CD4-positive, alpha-beta T cell (primary cell): ENCODE measurements at regions of chrX and their contacts with region 1.

Region 1: GRCh38 chrX:24498975-24499374 is 33.9 kb downstream of the PDK3 start:
- DNase-seq: peak in 3 of 14 experiments; percentile 61 to 74 (median 74)
- ATAC-seq: peak; percentile 80
- H3K4me3 ChIP-seq: no peak overlapping the region
- H3K4me3 Mint-ChIP-seq: peak overlapping the region; percentile 42
- H3K27ac ChIP-seq: peak overlapping the region in 1 of 2 donors; percentile 41
- H3K27ac Mint-ChIP-seq: peak overlapping the region; percentile 78
- H3K4me1 ChIP-seq: peaks cover 13% of the 10 kb centered on the region
- H3K4me1 Mint-ChIP-seq: peaks cover 34% of the 10 kb centered on the region
- H3K27me3 ChIP-seq: no peaks in the 10 kb centered on the region
- H3K27me3 Mint-ChIP-seq: no peaks in the 10 kb centered on the region
- CTCF ChIP-seq: peak; percentile 30

Region 2: DNA sequence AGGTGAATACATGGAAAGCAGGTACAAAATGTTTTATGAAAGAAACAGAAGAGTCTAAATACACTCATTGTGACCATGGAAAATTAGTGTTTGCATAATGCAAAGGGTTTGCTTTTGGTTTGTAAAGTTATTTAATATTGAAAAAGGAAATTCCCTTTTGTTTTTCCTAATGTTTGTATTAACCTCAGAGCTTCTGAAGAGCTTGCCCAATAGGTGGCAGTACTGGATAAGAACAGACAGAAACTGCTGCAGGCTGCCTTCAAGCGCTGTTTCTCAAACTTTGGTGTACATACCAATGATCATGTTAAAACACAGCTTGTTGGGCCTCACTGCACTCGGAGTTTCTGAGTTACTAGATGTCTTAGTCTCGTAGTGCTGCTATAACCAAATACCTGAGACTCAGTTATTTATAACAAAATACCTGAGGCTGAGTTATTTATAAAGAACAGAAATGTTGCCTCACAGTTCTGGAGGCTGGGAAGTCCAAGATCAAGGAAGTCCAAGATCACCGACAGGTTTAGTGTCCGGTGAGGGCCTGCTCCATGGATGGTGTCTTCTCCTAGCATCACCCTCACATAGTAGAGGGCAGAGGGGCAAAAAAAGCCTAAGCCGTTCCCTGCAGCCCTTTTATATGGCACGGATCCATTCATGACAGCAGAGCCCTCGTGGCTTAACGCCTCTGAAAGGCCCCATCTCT is 239.3 kb before region 1 on chrX:
- CTCF ChIA-PET with region 1: no interaction called
- POLR2A ChIA-PET with region 1: no interaction called
- intact Hi-C with region 1: loop called in 1 of 2 experiments (anchors 2 kb)
- DNase-seq: peak in 4 of 14 experiments; percentile 15 to 54 (median 38)
- ATAC-seq: no peak
- H3K4me3 ChIP-seq: no peak overlapping the region
- H3K4me3 Mint-ChIP-seq: no peak overlapping the region
- H3K27ac ChIP-seq: no peak overlapping the region
- H3K27ac Mint-ChIP-seq: no peak overlapping the region
- H3K4me1 ChIP-seq: peaks cover 10% of the 10 kb centered on the region
- H3K4me1 Mint-ChIP-seq: peaks cover 9% of the 10 kb centered on the region
- H3K27me3 ChIP-seq: no peaks in the 10 kb centered on the region
- H3K27me3 Mint-ChIP-seq: no peaks in the 10 kb centered on the region
- CTCF ChIP-seq: peak; percentile 50

Region 3: DNA sequence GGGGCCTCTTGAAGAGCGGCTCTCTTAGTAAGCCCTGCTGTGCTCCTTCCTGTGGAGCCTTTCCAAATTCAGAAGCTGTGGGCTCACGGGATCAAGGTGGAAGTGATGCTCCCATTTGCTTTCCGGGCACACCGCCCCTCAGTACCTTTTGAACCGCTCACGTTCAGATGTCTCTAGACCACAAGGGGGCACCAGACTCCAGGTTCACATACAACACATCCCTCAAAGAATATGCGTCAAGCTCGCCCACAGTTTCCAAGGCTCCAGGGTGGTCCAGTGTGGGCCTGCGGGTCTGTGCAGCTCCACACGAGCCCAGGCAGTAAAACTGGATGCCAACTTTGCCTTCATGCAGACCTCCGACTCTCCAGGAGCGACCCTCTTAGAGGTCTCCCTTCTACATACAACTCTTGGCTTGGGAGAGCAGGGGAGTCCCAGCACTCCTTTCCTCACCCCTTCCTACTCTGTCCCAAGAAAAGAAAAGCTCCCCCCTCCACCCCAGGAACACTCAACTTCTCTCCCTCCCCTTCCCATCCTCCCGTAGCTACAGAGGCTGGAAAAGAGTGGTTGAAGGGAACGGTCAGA is 127.5 kb before region 1 on chrX:
- CTCF ChIA-PET with region 1: interaction called, 9 read pairs
- POLR2A ChIA-PET with region 1: no interaction called
- intact Hi-C with region 1: loop called in 1 of 2 experiments (anchors 1 kb)
- DNase-seq: peak; percentile 24 to 78 (median 40)
- ATAC-seq: peak; percentile 73
- H3K4me3 ChIP-seq: no peak overlapping the region
- H3K4me3 Mint-ChIP-seq: no peak overlapping the region
- H3K27ac ChIP-seq: no peak overlapping the region
- H3K27ac Mint-ChIP-seq: no peak overlapping the region
- H3K4me1 ChIP-seq: peaks cover 6% of the 10 kb centered on the region
- H3K4me1 Mint-ChIP-seq: peaks cover 6% of the 10 kb centered on the region
- H3K27me3 ChIP-seq: no peaks in the 10 kb centered on the region
- H3K27me3 Mint-ChIP-seq: no peaks in the 10 kb centered on the region
- CTCF ChIP-seq: peak; percentile 58

Region 4: GRCh38 chrX:24395775-24396174 is 103.2 kb before region 1 on chrX:
- CTCF ChIA-PET with region 1: interaction called, 64 read pairs
- POLR2A ChIA-PET with region 1: interaction called, 33 read pairs
- intact Hi-C with region 1: loop called (anchors 1 kb)
- DNase-seq: peak in 12 of 14 experiments; percentile 4 to 81 (median 26)
- ATAC-seq: peak; percentile 77
- H3K4me3 ChIP-seq: no peak overlapping the region
- H3K4me3 Mint-ChIP-seq: no peak overlapping the region
- H3K27ac ChIP-seq: no peak overlapping the region
- H3K27ac Mint-ChIP-seq: no peak overlapping the region
- H3K4me1 ChIP-seq: no peaks in the 10 kb centered on the region
- H3K4me1 Mint-ChIP-seq: peaks cover 6% of the 10 kb centered on the region
- H3K27me3 ChIP-seq: peaks cover 0 to 2% of the 10 kb centered on the region in 2 experiments
- H3K27me3 Mint-ChIP-seq: no peaks in the 10 kb centered on the region
- CTCF ChIP-seq: peak; percentile 72

Region 5: GRCh38 chrX:24448762-24449250 is 50.2 kb before region 1 on chrX:
- CTCF ChIA-PET with region 1: no interaction called
- POLR2A ChIA-PET with region 1: interaction called, 3 read pairs
- intact Hi-C with region 1: loop called (anchors 10 kb)
- DNase-seq: no peak
- ATAC-seq: no peak
- H3K4me3 ChIP-seq: no peak overlapping the region
- H3K4me3 Mint-ChIP-seq: no peak overlapping the region
- H3K27ac ChIP-seq: no peak overlapping the region
- H3K27ac Mint-ChIP-seq: no peak overlapping the region
- H3K4me1 ChIP-seq: no peaks in the 10 kb centered on the region
- H3K4me1 Mint-ChIP-seq: no peaks in the 10 kb centered on the region
- H3K27me3 ChIP-seq: no peaks in the 10 kb centered on the region
- H3K27me3 Mint-ChIP-seq: no peaks in the 10 kb centered on the region
- CTCF ChIP-seq: no peak

Region 6: DNA sequence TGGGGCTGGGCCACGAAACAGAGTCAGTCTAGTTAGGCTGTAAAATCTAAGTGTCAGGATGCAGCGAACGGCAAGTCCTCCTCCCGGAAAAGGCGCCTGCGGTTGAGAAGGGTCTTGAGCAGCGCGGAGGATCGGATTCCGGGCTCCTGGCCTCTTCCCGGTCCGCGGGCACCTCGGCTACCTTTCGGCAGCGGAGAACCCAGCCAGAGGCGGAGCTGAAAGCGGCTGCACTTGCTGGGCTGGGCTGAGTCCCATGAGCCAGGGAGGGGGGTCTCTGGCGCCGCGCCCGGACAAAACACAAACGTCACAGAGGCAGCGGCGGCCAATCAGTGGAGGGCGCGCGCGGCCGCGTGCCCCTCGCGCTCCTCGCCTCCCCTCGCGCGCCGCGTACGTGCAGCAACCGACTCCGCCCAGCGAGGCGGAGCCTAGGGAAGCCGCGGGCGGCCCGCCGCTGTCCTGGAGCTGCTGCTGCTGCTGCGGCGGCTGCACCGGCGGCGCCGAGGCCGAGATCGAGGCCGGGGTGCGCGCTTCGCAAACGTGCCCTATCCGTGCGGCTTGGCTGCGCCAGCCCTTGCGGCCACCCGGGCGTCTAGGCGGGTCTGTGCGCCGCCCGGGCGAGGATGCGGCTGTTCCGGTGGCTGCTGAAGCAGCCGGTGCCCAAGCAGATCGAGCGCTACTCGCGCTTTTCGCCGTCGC is 34.0 kb before region 1 on chrX and contains the start of gene PDK3:
- CTCF ChIA-PET with region 1: interaction called, 7 read pairs
- POLR2A ChIA-PET with region 1: interaction called, 37 read pairs
- intact Hi-C with region 1: loop called in 1 of 2 experiments (anchors 5 kb)
- DNase-seq: peak; percentile 81 to 95 (median 88)
- ATAC-seq: peak; percentile 94
- H3K4me3 ChIP-seq: peak within 1 kb of the TSS; percentile 89
- H3K4me3 Mint-ChIP-seq: peak within 1 kb of the TSS; percentile 88
- H3K27ac ChIP-seq: peak within 1 kb of the TSS; percentile 82 to 84
- H3K27ac Mint-ChIP-seq: peak within 1 kb of the TSS; percentile 95
- H3K4me1 ChIP-seq: peaks cover 18% of the 10 kb centered on the region
- H3K4me1 Mint-ChIP-seq: peaks cover 36% of the 10 kb centered on the region
- H3K27me3 ChIP-seq: no peaks in the 10 kb centered on the region
- H3K27me3 Mint-ChIP-seq: no peaks in the 10 kb centered on the region
- CTCF ChIP-seq: no peak
- total RNA-seq, gene PDK3: 12.5 to 12.6 TPM

Region 7: DNA sequence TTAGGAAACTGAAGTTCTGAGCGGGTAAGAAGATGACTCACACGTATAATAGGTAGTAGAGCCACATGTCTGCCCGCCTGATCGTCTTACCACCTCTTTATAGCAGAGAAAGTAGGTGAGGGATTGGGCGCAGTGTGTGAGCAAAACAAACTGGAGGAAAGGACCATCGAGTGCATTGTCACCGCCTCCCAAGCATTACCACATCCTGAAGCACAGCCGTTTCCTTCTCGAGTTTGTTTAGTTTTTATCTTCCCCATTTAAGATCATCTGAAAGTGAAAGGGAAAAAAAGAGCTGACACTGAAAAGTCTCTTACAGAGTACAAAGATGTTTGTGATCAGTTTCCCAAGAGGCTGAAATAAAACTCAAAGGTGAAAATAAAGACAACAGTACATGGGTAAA is 19.1 kb before region 1 on chrX:
- CTCF ChIA-PET with region 1: interaction called, 18 read pairs
- POLR2A ChIA-PET with region 1: interaction called, 30 read pairs
- intact Hi-C with region 1: loop called in 1 of 2 experiments (anchors 2 kb)
- DNase-seq: peak; percentile 46 to 94 (median 63)
- ATAC-seq: peak; percentile 96
- H3K4me3 ChIP-seq: peak overlapping the region; percentile 39
- H3K4me3 Mint-ChIP-seq: peak overlapping the region; percentile 79
- H3K27ac ChIP-seq: peak overlapping the region; percentile 79 to 91
- H3K27ac Mint-ChIP-seq: peak overlapping the region; percentile 87
- H3K4me1 ChIP-seq: peaks cover 51% of the 10 kb centered on the region
- H3K4me1 Mint-ChIP-seq: peaks cover 86% of the 10 kb centered on the region
- H3K27me3 ChIP-seq: no peaks in the 10 kb centered on the region
- H3K27me3 Mint-ChIP-seq: no peaks in the 10 kb centered on the region
- CTCF ChIP-seq: no peak

Region 8: GRCh38 chrX:24515447-24515846 is 16.5 kb after region 1 on chrX:
- CTCF ChIA-PET with region 1: no interaction called
- POLR2A ChIA-PET with region 1: no interaction called
- intact Hi-C with region 1: no loop called
- DNase-seq: no peak
- ATAC-seq: no peak
- H3K4me3 ChIP-seq: no peak overlapping the region
- H3K4me3 Mint-ChIP-seq: no peak overlapping the region
- H3K27ac ChIP-seq: no peak overlapping the region
- H3K27ac Mint-ChIP-seq: no peak overlapping the region
- H3K4me1 ChIP-seq: no peaks in the 10 kb centered on the region
- H3K4me1 Mint-ChIP-seq: no peaks in the 10 kb centered on the region
- H3K27me3 ChIP-seq: no peaks in the 10 kb centered on the region
- H3K27me3 Mint-ChIP-seq: no peaks in the 10 kb centered on the region
- CTCF ChIP-seq: no peak